HEK293T (cell line): ENCODE measurements at regions of chr1 and their contacts with region 1.

Region 1: GRCh38 chr1:210252621-210253051 is 20.0 kb downstream of the SERTAD4 start:
- DNase-seq: no peak

Region 2: DNA sequence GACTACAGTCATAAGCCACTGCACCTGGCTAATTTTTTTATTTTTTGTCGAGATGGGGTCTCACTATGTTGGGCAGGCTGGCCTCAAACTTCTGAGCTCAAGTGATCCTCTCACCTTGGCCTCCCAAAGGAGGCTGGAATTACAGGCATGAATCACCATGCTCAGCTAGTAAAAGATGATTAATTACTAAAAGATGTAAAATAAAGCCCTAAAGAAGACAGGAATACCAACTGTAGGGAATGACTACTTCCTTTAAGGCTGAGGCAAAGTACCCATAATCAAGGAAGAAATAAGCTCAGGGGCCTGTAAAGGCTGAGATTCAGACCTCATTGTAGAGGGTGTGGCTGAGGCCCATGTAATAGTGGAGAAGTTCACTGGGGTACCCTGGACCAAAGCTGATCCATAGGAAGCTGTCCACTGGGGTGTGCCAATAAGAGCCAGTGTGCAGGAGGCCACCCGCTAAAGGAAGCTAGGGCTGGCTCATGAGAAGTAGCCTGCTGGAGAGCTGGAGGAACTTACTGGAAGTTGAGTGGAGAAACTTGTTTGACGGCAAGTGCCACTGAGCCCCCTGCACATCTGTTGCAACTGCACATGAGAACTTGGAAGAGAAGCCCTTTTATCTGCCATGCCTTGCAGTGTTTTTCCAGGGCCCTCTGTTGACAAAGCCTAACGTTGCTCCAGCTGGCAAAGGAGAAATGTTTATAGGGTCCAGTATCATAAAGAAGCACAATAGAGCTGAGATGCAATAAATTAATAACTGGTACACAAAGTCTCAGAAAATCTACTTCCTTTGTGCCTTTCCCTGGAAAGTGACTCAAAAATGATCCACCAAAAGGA is 37.8 kb before region 1 on chr1:
- CTCF ChIA-PET with region 1: no interaction called
- POLR2A ChIA-PET with region 1: no interaction called
- DNase-seq: no peak

Region 3: GRCh38 chr1:210292231-210292871 is 39.7 kb after region 1 on chr1:
- CTCF ChIA-PET with region 1: no interaction called
- POLR2A ChIA-PET with region 1: interaction called, 10 read pairs
- DNase-seq: peak; percentile 75